ENCODE measurements at regions of chr12 and their contacts with region 1.

Region 1: DNA sequence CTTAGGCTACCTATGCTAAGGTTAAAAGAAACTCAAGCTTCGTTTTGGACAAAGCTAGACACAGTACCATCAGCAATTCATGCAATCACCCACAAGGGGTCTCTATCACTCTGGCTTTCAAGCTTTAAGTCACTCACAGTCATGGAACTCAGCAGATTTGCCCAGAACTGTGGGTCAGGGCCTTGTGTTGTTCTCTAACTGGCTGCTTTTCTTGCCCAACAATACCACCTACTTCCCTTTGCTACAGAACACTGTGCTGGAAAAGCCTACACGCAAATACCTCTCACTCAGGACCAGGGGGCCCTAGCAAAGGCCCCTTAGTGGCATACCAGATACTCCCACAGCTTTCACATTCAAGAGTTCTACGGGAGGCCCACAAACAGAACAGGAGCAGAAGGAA is 9.1 kb downstream of the NEMP1 start:
- DNase-seq: peak; percentile 72
- H3K4me3 ChIP-seq: no peak overlapping the region
- H3K27ac ChIP-seq: peak overlapping the region; percentile 70
- H3K4me1 ChIP-seq: no peaks in the 10 kb centered on the region
- H3K27me3 ChIP-seq: no peaks in the 10 kb centered on the region
- CTCF ChIP-seq: peak; percentile 53 to 97 (median 91)
- POLR2A ChIP-seq: no peak

Region 2: DNA sequence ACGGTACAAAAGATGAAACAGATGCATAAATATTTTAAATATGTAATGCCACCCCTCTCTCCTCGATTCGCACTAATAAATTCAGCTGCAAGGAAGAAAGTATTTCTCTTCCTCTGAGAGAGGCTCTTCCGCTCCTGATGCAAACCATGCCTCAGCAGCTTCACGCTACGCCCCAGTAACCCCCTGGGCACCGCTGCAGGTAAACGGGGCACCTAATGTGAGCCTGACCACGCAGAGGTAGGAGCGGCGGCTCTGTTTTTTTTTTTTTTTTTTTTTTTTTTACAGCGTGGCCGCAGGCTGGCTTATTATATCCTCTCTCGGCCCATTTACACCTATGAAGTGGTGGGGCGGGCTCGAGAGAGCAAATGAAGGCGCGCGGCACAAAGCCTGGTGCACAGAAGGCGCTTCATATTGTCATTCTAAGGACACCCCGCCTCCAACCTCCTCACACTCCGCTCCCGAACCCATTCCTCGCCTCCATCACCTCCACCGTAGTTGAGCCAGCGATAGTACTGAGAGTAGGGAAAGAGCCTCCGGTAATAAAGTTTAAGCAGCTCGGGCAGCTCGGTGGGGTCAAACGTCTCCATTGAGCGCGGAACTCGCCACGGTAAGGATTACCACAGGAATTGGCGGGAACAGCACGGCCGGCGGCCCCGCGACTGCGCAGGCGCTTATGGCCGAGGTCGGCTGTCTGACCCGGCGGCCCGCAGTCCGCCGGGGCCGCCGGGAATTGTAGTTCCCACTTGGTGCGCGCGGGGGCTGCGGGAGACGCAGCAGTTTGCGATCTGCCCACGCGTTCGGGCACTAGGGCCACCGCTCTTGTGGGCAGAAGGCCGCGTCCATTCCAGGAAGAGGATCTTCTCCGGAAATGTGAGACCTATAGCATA is 317.6 kb before region 1 on chr12 and contains the start of gene PRIM1:
- intact Hi-C with region 1: loop called (anchors 10 kb)
- DNase-seq: peak; percentile 71
- H3K4me3 ChIP-seq: peak within 1 kb of the TSS; percentile 53 to 67
- H3K27ac ChIP-seq: peak within 1 kb of the TSS; percentile 75 to 81
- H3K4me1 ChIP-seq: peaks cover 5% of the 10 kb centered on the region
- H3K27me3 ChIP-seq: no peaks in the 10 kb centered on the region
- CTCF ChIP-seq: peak in 2 of 4 experiments; percentile 48 to 55
- POLR2A ChIP-seq: peak; percentile 48
- total RNA-seq, gene PRIM1: 9.0 to 14.5 TPM

Region 3: DNA sequence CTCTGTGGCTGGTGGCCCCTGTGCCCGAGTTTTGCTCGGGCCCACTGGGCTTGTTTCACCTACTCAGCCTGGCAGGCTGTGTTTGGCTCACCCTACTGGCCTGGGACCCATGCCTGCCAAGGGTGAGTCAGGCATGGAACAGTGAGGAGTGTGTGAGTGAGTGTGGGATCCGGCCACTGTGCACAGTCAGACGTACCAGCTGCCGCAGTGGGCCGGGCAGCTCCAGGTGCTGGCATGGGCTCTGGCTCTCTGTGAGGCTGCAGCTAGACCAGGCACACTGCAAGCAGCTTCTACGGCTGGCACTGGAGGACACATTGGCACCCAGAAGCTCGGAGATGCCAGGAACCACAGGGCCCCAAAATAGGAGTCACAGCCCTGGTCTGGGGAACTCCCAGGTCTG is 265.8 kb before region 1 on chr12:
- intact Hi-C with region 1: no loop called
- DNase-seq: peak; percentile 13
- H3K4me3 ChIP-seq: no peak overlapping the region
- H3K27ac ChIP-seq: no peak overlapping the region
- H3K4me1 ChIP-seq: no peaks in the 10 kb centered on the region
- H3K27me3 ChIP-seq: no peaks in the 10 kb centered on the region
- CTCF ChIP-seq: no peak
- POLR2A ChIP-seq: no peak

Region 4: DNA sequence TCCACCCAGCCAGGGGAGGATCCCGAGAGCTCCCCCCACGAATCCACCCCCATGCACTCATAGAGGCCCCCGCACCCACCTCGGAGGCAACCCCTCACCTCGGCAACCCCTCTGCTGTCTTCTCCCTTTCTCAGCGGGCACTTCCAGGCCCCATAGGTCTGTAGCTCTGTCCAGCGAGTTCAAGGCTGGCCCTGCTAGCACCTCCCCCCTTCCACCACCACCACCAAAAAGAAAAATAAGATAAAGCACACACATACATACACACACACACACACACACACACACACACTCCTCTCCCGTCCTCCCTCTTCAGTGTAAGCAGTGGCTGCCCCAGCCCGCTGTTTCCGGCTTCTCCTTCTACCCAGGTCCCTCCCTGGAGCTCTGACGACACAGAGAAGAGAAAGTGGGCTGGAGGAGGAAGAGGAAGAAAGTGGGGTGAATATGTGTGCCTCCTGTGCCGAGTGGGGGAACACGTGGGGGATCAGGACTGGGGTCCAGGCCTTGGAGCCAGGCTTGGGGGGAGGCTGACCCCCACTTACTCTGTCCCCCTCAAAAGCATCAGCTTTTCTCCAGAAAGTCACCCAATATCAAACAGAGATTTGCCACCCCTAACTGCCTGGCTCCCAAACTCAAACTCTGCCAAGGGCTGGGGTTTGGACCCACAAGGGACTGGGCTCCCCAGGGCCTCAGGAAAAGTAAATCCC is 41.7 kb after region 1 on chr12 and contains the start of gene STAT6:
- intact Hi-C with region 1: loop called (anchors 1 kb)
- DNase-seq: peak; percentile 84
- H3K4me3 ChIP-seq: peak within 1 kb of the TSS; percentile 47 to 54
- H3K27ac ChIP-seq: peak within 1 kb of the TSS; percentile 100
- H3K4me1 ChIP-seq: peaks cover 5% of the 10 kb centered on the region
- H3K27me3 ChIP-seq: no peaks in the 10 kb centered on the region
- CTCF ChIP-seq: no peak
- POLR2A ChIP-seq: peak; percentile 79
- total RNA-seq, gene STAT6: 124 to 237 TPM

Region 5: DNA sequence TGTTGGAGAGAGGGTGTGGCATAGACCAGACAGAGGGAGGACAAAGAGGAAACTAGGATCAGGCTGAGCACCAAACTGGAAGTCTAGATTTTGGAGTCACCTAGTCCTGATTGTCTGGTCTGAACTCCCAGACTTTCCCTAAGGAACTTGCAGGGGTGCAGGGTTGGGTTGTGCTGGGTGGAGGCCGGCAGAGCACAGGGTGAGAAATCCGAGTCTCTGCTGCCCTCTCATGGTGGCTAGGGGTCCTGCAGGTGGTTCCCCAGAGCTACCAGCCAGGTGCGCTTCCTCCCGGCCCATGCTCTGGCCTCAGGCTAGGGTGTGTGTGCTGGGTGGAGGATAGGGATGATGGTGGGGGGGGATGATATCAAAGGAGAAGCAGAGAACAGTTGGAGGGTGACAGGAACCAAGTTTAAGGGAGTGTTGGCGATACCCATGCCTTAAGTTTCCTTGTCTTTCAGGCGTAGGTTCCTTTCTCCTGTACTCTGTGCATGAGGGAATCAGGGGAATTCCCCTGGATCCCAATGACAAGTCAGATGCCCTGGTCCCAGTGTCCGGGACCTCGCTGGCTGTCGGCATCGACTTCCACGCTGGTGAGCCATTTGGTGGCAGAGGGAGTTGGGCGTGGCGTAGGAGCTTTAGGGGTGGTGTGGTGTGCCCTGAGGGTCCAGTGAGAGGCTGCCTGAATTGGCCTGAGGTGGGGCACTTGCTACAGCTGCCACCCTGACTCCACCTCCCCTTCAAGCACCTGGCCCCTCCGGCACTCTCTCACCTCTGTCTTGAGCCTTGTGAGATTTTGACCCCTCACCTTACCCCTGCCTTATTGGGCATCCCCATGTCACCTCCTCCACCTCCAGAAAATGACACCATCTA is 113.6 kb after region 1 on chr12:
- intact Hi-C with region 1: loop called (anchors 5 kb)
- DNase-seq: peak; percentile 79
- H3K4me3 ChIP-seq: no peak overlapping the region
- H3K27ac ChIP-seq: no peak overlapping the region
- H3K4me1 ChIP-seq: no peaks in the 10 kb centered on the region
- H3K27me3 ChIP-seq: no peaks in the 10 kb centered on the region
- CTCF ChIP-seq: peak; percentile 78 to 95 (median 90)
- POLR2A ChIP-seq: no peak

Measured in prostate gland (tissue), 2 donors.